ENCODE measurements at regions of chr22 and their contacts with region 1.

Region 1: DNA sequence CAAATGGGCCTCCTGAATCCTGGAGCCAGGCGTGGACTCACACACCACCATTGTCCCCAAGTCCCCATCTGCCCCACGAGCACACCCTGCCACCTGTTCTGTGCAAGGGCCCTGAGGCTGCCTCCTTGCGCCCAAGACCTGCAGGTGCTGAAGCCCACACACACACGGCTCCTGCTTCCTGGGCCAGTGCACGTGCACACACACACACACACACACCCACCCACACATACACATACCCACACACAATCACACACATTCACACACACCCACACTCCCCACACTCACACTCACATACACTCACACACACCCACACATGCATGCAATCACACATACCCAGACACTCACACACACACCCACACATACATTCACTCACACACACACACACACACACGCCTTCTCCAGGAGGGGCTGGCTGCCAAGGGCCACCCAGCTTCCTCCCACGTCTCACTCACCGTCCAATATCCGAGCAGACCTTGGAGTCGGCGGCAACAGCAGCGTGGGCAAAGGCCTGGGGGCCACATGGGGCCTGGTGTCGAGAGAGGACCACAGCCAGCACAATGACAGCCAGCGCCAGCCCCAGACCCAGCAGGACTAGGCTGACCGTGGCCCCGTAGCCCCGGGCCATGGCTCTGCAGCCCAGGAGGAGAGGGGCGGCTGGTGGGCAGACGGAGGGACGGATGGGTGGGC is 638 bp downstream of the GGT5 start:
- DNase-seq: peak; percentile 28
- H3K4me3 ChIP-seq: no peak overlapping the region
- H3K27ac ChIP-seq: no peak overlapping the region
- H3K4me1 ChIP-seq: peaks cover 21% of the 10 kb centered on the region
- H3K27me3 ChIP-seq: no peaks in the 10 kb centered on the region

Region 2: GRCh38 chr22:24189249-24190158 is 54.7 kb before region 1 on chr22:
- in situ Hi-C with region 1: loop called (anchors 10 kb)
- DNase-seq: peak; percentile 80
- H3K4me3 ChIP-seq: no peak overlapping the region
- H3K27ac ChIP-seq: no peak overlapping the region
- H3K4me1 ChIP-seq: 0 out of 2 replicates have a peak, but pooled peaks cover 3% of the 10 kb centered on the region
- H3K27me3 ChIP-seq: no peaks in the 10 kb centered on the region

Measured in GM23248 (cell line).